ENCODE measurements at regions of chr18 and their contacts with region 1.

Region 1: DNA sequence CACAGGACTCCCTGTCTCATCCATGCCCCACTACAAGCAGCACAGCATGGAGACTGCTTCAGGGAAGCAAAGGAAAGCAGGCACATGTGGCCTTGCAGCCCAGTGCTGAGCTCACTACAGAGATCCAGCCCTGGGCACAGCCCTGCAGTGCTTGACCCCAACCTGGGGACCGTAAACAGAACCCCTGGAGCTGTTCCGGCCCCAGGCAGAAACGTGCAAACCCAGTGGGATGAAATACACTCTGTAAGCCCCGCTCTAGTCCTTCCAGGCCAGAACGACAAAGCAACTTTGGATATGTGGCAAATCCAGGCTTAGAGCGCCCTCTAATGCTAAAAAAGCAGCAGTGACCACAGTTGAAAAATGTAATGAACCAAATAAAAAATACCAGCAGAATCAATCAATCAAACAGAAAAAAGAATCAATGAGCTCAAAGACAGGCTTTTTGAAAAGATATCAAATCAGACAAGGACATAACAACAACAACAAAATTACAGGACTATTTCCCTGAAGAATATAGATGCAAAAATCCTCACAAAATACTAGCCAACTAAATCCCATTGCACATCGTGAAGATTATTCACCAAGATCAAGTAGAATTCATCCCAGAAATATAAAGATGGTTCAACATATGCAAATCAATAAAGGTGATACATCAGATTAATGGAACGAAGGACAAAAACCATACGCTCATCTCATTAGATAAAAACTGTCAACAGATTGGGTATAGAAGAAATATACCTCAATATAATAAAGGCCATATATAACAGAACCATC is 45.6 kb downstream of the ZNF519 start:
- DNase-seq: peak; percentile 59
- H3K4me3 ChIP-seq: no peak overlapping the region
- H3K27ac ChIP-seq: no peak overlapping the region
- H3K4me1 ChIP-seq: no peaks in the 10 kb centered on the region
- CTCF ChIP-seq: peak; percentile 93

Region 2: DNA sequence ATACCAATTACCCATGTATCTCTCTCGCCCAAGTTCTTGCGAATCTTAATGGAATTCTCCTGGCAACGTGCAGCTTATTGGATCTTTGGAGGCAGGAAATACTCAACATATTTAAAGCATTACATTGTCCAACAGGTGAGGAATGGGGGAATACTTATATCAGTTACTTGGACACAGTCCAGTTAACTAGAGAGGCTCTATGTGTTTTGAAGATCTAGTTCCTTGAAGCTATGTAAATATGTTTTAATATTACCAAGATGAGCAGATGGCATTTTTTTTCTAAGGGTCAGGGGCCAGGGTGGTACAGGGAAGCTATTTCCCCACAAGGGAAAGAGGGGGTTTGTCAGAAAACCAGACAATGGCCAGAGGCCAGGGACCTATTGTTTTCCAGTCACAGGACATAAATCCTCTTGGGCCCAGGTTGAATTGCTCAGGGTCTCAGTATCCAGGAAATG is 289.5 kb before region 1 on chr18:
- CTCF ChIA-PET with region 1: no interaction called
- POLR2A ChIA-PET with region 1: no interaction called
- intact Hi-C with region 1: no loop called
- DNase-seq: no peak
- H3K4me3 ChIP-seq: no peak overlapping the region
- H3K27ac ChIP-seq: no peak overlapping the region
- H3K4me1 ChIP-seq: no peaks in the 10 kb centered on the region
- CTCF ChIP-seq: no peak

Region 3: GRCh38 chr18:13813271-13813849 is 273.3 kb before region 1 on chr18:
- CTCF ChIA-PET with region 1: interaction called, 3 read pairs
- POLR2A ChIA-PET with region 1: no interaction called
- intact Hi-C with region 1: loop called (anchors 2 kb)
- DNase-seq: peak; percentile 64
- H3K4me3 ChIP-seq: no peak overlapping the region
- H3K27ac ChIP-seq: no peak overlapping the region
- H3K4me1 ChIP-seq: no peaks in the 10 kb centered on the region
- CTCF ChIP-seq: peak; percentile 93

Region 4: GRCh38 chr18:13823707-13824395 is 262.8 kb before region 1 on chr18 and contains the start of gene MC5R:
- CTCF ChIA-PET with region 1: no interaction called
- POLR2A ChIA-PET with region 1: no interaction called
- intact Hi-C with region 1: loop called (anchors 1 kb)
- DNase-seq: peak; percentile 68
- H3K4me3 ChIP-seq: peak within 1 kb of the TSS; percentile 50
- H3K27ac ChIP-seq: no peak within 1 kb of the TSS
- H3K4me1 ChIP-seq: no peaks in the 10 kb centered on the region
- CTCF ChIP-seq: peak; percentile 86
- total RNA-seq, gene MC5R: not detected in 2 replicates

Region 5: GRCh38 chr18:13874558-13874957 is 212.1 kb before region 1 on chr18:
- CTCF ChIA-PET with region 1: no interaction called
- POLR2A ChIA-PET with region 1: no interaction called
- intact Hi-C with region 1: loop called (anchors 2 kb)
- DNase-seq: no peak
- H3K4me3 ChIP-seq: no peak overlapping the region
- H3K27ac ChIP-seq: no peak overlapping the region
- H3K4me1 ChIP-seq: no peaks in the 10 kb centered on the region
- CTCF ChIP-seq: peak; percentile 51

Region 6: DNA sequence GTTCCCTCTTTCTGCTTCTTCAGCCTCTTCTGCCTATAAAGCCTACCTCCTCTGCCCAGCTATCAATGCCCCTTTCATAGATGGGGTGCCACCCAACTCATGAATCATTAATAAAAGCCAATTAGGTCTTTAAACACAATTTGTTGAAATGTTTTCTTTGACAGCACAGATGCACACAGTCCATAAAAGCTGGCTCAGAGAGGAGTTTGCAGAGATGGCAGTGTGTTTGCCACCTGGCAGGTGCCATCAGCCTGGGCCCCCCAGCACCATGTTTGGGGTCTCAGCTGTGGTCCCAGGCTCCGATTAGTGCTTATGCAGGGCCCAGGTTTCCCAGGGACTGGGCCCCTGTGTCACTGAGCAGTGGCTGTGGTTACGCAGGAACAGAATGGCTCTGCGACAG is 163.4 kb before region 1 on chr18:
- CTCF ChIA-PET with region 1: no interaction called
- POLR2A ChIA-PET with region 1: no interaction called
- intact Hi-C with region 1: loop called (anchors 10 kb)
- DNase-seq: no peak
- H3K4me3 ChIP-seq: no peak overlapping the region
- H3K27ac ChIP-seq: no peak overlapping the region
- H3K4me1 ChIP-seq: no peaks in the 10 kb centered on the region
- CTCF ChIP-seq: no peak

Region 7: GRCh38 chr18:14117606-14118005 is 31.0 kb after region 1 on chr18:
- CTCF ChIA-PET with region 1: no interaction called
- POLR2A ChIA-PET with region 1: no interaction called
- intact Hi-C with region 1: no loop called
- DNase-seq: no peak
- H3K4me3 ChIP-seq: no peak overlapping the region
- H3K27ac ChIP-seq: no peak overlapping the region
- H3K4me1 ChIP-seq: no peaks in the 10 kb centered on the region
- CTCF ChIP-seq: no peak

Measured in OCI-LY7 (cell line).